ENCODE measurements at regions of chr5 and their contacts with region 1.

Region 1: DNA sequence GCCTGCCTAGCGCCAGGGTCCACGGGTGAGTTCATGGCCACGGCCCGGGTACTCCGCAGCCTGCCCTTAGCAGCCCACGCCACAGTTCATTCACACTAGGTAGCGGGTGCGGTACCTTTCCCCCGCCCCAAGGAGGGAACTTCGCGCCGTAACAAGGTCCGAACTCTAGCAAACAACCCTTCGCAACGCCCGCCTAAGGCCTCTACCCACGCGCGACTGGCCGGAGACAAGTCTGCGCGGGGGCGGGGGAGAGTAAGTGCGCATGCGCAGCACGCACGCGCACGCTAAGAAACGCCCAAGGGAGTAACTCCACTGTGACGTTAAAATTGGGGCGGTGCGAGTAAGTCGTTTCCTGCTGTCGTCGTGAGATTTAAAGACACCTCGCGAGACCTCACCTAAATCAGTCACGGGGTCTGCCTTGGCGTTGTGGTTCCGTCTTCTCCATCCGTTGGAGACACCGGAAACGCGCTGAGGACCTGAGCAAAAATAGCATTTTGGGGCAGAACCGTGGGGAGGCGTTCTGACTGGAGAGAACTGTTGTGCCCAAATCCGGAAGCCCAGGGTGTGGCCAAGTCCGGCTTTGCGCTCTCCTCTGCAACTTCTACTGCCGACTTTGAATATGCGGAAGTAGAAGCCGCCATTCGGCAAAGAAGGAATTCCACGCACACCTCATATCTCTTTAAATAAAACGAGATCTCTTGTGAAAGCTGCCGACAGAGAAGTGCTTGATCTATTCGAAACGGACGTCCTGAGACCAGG is at the start of gene RAPGEF6:
- DNase-seq: peak; percentile 98
- ATAC-seq: peak; percentile 89
- H3K4me3 Mint-ChIP-seq: no peak within 1 kb of the TSS
- H3K27ac Mint-ChIP-seq: peak within 1 kb of the TSS; percentile 93
- H3K4me1 Mint-ChIP-seq: peaks cover 22% of the 10 kb centered on the region
- H3K27me3 Mint-ChIP-seq: no peaks in the 10 kb centered on the region
- total RNA-seq, gene RAPGEF6: 26.5 to 30.5 TPM

Region 2: GRCh38 chr5:131488463-131488862 is 146.7 kb before region 1 on chr5:
- CTCF ChIA-PET with region 1: no interaction called
- POLR2A ChIA-PET with region 1: no interaction called
- intact Hi-C with region 1: loop called in 1 of 2 experiments (anchors 5 kb)
- DNase-seq: no peak
- ATAC-seq: peak; percentile 85
- H3K4me3 Mint-ChIP-seq: peak overlapping the region; percentile 21
- H3K27ac Mint-ChIP-seq: peak overlapping the region; percentile 42
- H3K4me1 Mint-ChIP-seq: peaks cover 34% of the 10 kb centered on the region
- H3K27me3 Mint-ChIP-seq: no peaks in the 10 kb centered on the region

Region 3: GRCh38 chr5:131589510-131590348 is 45.4 kb before region 1 on chr5:
- CTCF ChIA-PET with region 1: interaction called, 20 read pairs
- POLR2A ChIA-PET with region 1: no interaction called
- intact Hi-C with region 1: loop called (anchors 2 kb)
- DNase-seq: peak; percentile 13
- ATAC-seq: peak; percentile 74
- H3K4me3 Mint-ChIP-seq: no peak overlapping the region
- H3K27ac Mint-ChIP-seq: no peak overlapping the region
- H3K4me1 Mint-ChIP-seq: peaks cover 40% of the 10 kb centered on the region
- H3K27me3 Mint-ChIP-seq: no peaks in the 10 kb centered on the region

Region 4: GRCh38 chr5:132019857-132020555 is 384.8 kb after region 1 on chr5:
- CTCF ChIA-PET with region 1: no interaction called
- POLR2A ChIA-PET with region 1: no interaction called
- intact Hi-C with region 1: loop called (anchors 1 kb)
- DNase-seq: peak; percentile 89
- ATAC-seq: peak; percentile 90
- H3K4me3 Mint-ChIP-seq: peak overlapping the region; percentile 35
- H3K27ac Mint-ChIP-seq: peak overlapping the region; percentile 91
- H3K4me1 Mint-ChIP-seq: peaks cover 41% of the 10 kb centered on the region
- H3K27me3 Mint-ChIP-seq: peaks cover 36% of the 10 kb centered on the region

Region 5: DNA sequence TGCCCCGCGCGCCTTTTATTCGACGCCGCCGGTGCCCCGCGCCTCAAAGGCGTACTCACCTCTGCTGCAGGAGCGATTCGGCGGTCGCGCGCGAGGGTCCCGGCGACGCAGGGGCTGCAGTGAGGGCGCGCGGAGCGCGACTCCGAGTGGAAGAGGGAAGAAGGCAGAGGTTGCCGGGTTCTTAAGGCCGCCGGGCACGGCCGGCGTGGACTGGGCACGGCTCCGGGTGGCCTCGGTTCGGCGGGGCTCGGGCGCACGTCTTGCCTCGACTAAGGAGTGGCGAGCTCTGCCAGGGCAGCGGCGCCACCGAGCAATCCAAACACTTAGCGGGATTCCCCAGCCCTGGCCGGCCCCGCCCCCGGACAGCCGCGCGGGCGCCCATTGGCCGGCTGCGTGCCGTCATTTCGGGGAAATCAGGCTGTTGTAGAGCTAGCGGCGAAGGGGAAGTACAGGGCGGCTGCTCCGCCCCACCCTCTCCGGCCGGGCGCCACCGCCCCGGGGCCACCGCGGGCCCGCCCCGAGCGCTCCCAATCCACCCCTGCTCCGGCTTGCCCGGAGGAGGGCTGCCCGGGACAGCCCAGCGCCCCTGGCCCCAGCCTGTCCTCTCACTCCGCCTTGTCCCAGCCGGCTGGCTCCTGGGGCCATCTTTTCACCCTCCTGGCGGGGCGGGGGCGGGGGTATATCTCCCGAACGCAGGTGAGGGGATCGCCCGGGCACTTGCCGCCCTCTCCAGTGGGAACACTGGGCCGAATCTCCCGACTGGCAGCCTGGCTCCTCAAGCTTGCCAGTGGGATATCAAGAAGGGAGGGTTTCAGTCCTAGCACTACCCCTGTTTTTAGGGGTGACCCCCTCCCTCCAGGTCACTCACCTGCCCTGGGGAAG is 855.6 kb after region 1 on chr5 and contains the start of gene IRF1:
- CTCF ChIA-PET with region 1: no interaction called
- POLR2A ChIA-PET with region 1: no interaction called
- intact Hi-C with region 1: loop called in 1 of 2 experiments (anchors 1 kb)
- DNase-seq: peak; percentile 99
- ATAC-seq: peak; percentile 67
- H3K4me3 Mint-ChIP-seq: peak within 1 kb of the TSS; percentile 96
- H3K27ac Mint-ChIP-seq: peak within 1 kb of the TSS; percentile 97
- H3K4me1 Mint-ChIP-seq: peaks cover 69% of the 10 kb centered on the region
- H3K27me3 Mint-ChIP-seq: no peaks in the 10 kb centered on the region
- total RNA-seq, gene IRF1: 121 to 130 TPM

Region 6: GRCh38 chr5:132963175-132964104 is 1328.3 kb after region 1 on chr5 and contains the start of gene AFF4:
- CTCF ChIA-PET with region 1: no interaction called
- POLR2A ChIA-PET with region 1: no interaction called
- intact Hi-C with region 1: loop called in 1 of 2 experiments (anchors 10 kb)
- DNase-seq: peak; percentile 94
- ATAC-seq: peak; percentile 92
- H3K4me3 Mint-ChIP-seq: peak within 1 kb of the TSS; percentile 96
- H3K27ac Mint-ChIP-seq: peak within 1 kb of the TSS; percentile 99
- H3K4me1 Mint-ChIP-seq: peaks cover 32% of the 10 kb centered on the region
- H3K27me3 Mint-ChIP-seq: no peaks in the 10 kb centered on the region
- total RNA-seq, gene AFF4: 20.9 to 29.3 TPM

Measured in activated CD4-positive, alpha-beta T cell treated with anti-CD3 and anti-CD28 coated beads for 36 hours (primary cell).